ENCODE measurements at regions of chr1 and their contacts with region 1.

Region 1: GRCh38 chr1:153749408-153750005 is 21.7 kb downstream of the INTS3 start:
- DNase-seq: peak; percentile 72
- H3K4me3 Mint-ChIP-seq: no peak overlapping the region
- H3K27ac Mint-ChIP-seq: no peak overlapping the region
- H3K4me1 Mint-ChIP-seq: peaks cover 6% of the 10 kb centered on the region
- H3K27me3 Mint-ChIP-seq: no peaks in the 10 kb centered on the region

Region 2: GRCh38 chr1:153510984-153511410 is 238.5 kb before region 1 on chr1:
- intact Hi-C with region 1: loop called (anchors 2 kb)
- DNase-seq: peak; percentile 64
- H3K4me3 Mint-ChIP-seq: no peak overlapping the region
- H3K27ac Mint-ChIP-seq: peak overlapping the region; percentile 56
- H3K4me1 Mint-ChIP-seq: peaks cover 11% of the 10 kb centered on the region
- H3K27me3 Mint-ChIP-seq: no peaks in the 10 kb centered on the region

Region 3: GRCh38 chr1:153677718-153678505 is 71.6 kb before region 1 on chr1:
- intact Hi-C with region 1: loop called (anchors 1 kb)
- DNase-seq: peak; percentile 31
- H3K4me3 Mint-ChIP-seq: peak overlapping the region; percentile 71
- H3K27ac Mint-ChIP-seq: no peak overlapping the region
- H3K4me1 Mint-ChIP-seq: peaks cover 20% of the 10 kb centered on the region
- H3K27me3 Mint-ChIP-seq: peaks cover 42% of the 10 kb centered on the region

Region 4: DNA sequence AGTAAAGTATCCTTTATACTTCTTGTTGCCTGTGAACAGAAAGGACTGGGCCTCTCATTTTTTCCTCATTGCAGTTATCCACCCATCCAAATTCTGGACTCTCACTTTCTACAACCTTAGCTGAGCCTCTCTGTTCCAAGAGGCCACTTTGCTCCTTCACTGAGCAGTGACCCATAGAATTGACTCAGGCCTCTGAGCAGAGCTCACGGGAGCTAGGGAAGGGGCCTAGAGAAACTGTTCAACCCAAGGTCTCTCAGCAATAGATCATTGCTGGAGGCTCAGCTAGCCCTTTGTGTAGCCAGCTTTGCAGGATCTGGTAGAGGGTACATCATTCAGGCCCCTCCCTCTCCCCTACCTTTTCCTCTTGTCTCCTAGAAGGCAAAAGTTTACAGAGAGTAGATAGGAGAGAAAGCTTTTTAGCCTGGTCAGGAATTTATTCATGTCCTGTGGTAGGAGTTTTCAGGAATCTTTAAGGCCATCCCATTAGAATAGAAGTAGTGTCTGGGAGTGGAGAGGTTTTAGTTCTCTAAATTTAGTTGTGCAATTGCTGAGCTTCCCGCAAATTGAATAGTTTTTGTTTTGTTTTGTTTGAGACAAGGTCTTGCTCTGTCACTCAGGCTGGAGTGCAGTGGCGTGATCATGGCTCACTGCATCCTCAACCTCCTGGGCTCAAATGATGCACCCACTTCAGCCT is 15.0 kb before region 1 on chr1:
- intact Hi-C with region 1: no loop called
- DNase-seq: no peak
- H3K4me3 Mint-ChIP-seq: no peak overlapping the region
- H3K27ac Mint-ChIP-seq: no peak overlapping the region
- H3K4me1 Mint-ChIP-seq: peaks cover 24% of the 10 kb centered on the region
- H3K27me3 Mint-ChIP-seq: no peaks in the 10 kb centered on the region

Region 5: DNA sequence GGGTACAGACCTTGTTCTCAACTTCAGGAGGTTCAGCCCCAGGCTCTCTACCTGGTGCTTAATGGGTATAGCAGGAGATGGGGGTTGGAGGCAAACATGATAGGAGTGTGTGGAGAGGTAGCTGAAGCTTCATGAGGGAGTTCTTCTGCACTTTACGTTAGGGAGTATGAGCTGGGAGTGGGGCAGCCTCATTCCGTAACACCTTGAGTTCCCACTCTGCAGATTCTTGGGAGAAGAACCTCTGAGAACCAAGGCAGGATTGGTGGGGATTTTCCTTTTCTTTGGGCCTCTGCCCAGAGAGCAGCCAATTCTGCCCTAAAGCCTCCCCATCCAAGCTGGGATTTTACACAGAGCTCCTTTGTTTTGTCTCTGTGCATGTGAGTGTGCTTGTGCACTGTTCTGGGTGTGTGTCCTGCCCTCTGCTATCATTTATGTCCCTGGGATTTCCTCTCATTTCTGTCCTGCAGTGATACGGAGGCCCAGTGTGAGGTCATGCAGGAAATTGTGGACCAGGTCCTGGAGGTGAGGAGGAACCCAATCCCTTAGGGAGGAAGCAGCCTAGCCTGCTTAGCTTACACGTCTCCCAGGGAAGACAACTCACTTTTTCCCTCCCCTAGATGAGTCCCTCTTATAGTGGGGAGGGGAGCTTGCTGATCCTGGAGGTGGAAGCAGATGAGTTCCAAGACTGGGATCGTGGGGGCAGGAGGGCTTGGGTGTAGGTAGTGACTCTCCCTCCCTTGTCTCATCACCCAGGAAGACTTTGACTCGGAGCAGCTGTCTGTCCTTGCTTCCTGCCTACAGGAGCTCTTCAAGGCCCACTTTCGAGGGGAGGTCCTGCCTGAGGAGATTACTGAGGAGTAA is 14.1 kb after region 1 on chr1:
- intact Hi-C with region 1: no loop called
- DNase-seq: no peak
- H3K4me3 Mint-ChIP-seq: no peak overlapping the region
- H3K27ac Mint-ChIP-seq: no peak overlapping the region
- H3K4me1 Mint-ChIP-seq: no peaks in the 10 kb centered on the region
- H3K27me3 Mint-ChIP-seq: no peaks in the 10 kb centered on the region

Region 6: GRCh38 chr1:153880962-153881361 is 131.5 kb after region 1 on chr1:
- intact Hi-C with region 1: no loop called
- DNase-seq: no peak
- H3K4me3 Mint-ChIP-seq: no peak overlapping the region
- H3K27ac Mint-ChIP-seq: no peak overlapping the region
- H3K4me1 Mint-ChIP-seq: peaks cover 6% of the 10 kb centered on the region
- H3K27me3 Mint-ChIP-seq: no peaks in the 10 kb centered on the region